Endothelial cell of umbilical vein (primary cell): ENCODE measurements at regions of chr2 and their contacts with region 1.

Region 1: GRCh38 chr2:38315707-38316333 is 61.3 kb downstream of the ATL2 start:
- DNase-seq: peak; percentile 67
- H3K4me3 ChIP-seq: no peak overlapping the region
- H3K27ac ChIP-seq: no peak overlapping the region
- H3K4me1 ChIP-seq: no peaks in the 10 kb centered on the region
- H3K27me3 ChIP-seq: no peaks in the 10 kb centered on the region
- CTCF ChIP-seq: peak; percentile 38 to 41
- POLR2A ChIP-seq: no peak

Region 2: GRCh38 chr2:38465789-38466127 is 149.9 kb after region 1 on chr2:
- CTCF ChIA-PET with region 1: interaction called, 68 read pairs
- POLR2A ChIA-PET with region 1: interaction called, 3 read pairs
- dilution Hi-C with region 1: no loop called
- intact Hi-C with region 1: loop called (anchors 5 kb)
- DNase-seq: peak; percentile 40
- H3K4me3 ChIP-seq: no peak overlapping the region
- H3K27ac ChIP-seq: no peak overlapping the region
- H3K4me1 ChIP-seq: no peaks in the 10 kb centered on the region
- H3K27me3 ChIP-seq: peaks cover 2 to 3% of the 10 kb centered on the region in 2 experiments
- CTCF ChIP-seq: peak in 1 of 2 donors; percentile 54
- POLR2A ChIP-seq: no peak

Region 3: DNA sequence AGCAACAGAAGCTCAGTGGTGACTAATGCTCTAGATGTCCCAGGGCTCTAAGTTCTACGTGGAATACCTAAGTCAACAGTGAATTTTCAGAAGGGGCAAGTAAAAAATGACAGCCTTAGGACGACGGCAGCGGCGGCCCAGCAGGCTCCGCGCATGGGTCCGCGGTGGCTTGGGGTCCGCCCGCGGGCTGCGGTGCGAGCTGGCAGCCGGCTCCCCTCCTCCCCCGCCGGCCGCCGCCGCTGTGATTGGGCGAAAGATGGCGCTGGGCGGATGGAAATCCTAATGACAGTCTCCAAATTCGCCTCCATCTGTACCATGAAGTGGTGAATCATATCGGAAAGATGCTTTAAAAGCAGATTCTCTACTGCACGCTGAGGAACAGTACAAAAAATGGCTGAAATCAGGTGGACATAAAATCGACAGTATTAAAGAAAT is 212.2 kb after region 1 on chr2:
- CTCF ChIA-PET with region 1: interaction called, 11 read pairs
- POLR2A ChIA-PET with region 1: no interaction called
- dilution Hi-C with region 1: no loop called
- intact Hi-C with region 1: no loop called
- DNase-seq: peak; percentile 49
- H3K4me3 ChIP-seq: peak overlapping the region; percentile 20 to 65 (median 28)
- H3K27ac ChIP-seq: no peak overlapping the region
- H3K4me1 ChIP-seq: no peaks in the 10 kb centered on the region
- H3K27me3 ChIP-seq: peaks cover 4 to 5% of the 10 kb centered on the region in 2 experiments
- CTCF ChIP-seq: no peak
- POLR2A ChIP-seq: no peak

Region 4: GRCh38 chr2:38728694-38729093 is 412.9 kb after region 1 on chr2:
- CTCF ChIA-PET with region 1: interaction called, 9 read pairs
- POLR2A ChIA-PET with region 1: no interaction called
- dilution Hi-C with region 1: no loop called
- intact Hi-C with region 1: loop called (anchors 5 kb)
- DNase-seq: no peak
- H3K4me3 ChIP-seq: no peak overlapping the region
- H3K27ac ChIP-seq: no peak overlapping the region
- H3K4me1 ChIP-seq: no peaks in the 10 kb centered on the region
- H3K27me3 ChIP-seq: no peaks in the 10 kb centered on the region
- CTCF ChIP-seq: no peak
- POLR2A ChIP-seq: no peak

Region 5: DNA sequence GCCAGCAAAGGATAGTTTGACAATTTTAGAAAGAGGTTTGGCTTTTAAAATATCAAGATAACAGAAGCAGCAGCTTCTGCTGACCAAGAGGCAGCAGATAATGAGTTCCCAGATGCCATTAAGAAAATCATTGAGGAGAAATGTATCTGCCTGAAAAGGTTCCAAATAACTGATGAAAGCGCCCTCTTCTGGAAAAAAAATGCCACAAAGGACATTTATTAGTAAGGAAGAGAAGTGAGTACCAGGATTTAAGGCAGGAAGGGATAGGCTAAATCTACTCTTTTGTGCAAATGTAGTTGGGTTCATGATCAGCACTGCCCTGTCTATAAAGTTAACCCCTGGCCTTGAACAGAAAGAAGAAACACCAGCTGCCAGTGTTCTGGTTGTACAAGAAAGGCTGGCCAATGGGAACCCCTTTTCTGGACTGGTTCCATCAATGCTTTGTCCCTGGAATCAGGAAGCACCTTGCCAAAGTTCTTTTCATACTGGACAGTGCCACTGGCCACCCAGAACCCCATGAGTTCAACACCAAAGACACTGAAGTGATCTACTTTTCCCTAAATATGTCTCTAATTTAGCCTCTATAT is 519.3 kb after region 1 on chr2:
- CTCF ChIA-PET with region 1: interaction called, 3 read pairs
- POLR2A ChIA-PET with region 1: no interaction called
- dilution Hi-C with region 1: no loop called
- intact Hi-C with region 1: loop called (anchors 2 kb)
- DNase-seq: peak; percentile 40
- H3K4me3 ChIP-seq: no peak overlapping the region
- H3K27ac ChIP-seq: no peak overlapping the region
- H3K4me1 ChIP-seq: no peaks in the 10 kb centered on the region
- H3K27me3 ChIP-seq: no peaks in the 10 kb centered on the region
- CTCF ChIP-seq: peak; percentile 17 to 35
- POLR2A ChIP-seq: no peak